Activated CD4-positive, alpha-beta T cell treated with anti-CD3 and anti-CD28 coated beads for 36 hours (primary cell): ENCODE measurements at regions of chr2 and their contacts with region 1.

Region 1: GRCh38 chr2:10434886-10435819 is 13.0 kb downstream of the ODC1 start:
- DNase-seq: peak; percentile 85
- ATAC-seq: peak; percentile 56
- H3K4me3 Mint-ChIP-seq: no peak overlapping the region
- H3K27ac Mint-ChIP-seq: no peak overlapping the region
- H3K4me1 Mint-ChIP-seq: peaks cover 11% of the 10 kb centered on the region
- H3K27me3 Mint-ChIP-seq: peaks cover 6% of the 10 kb centered on the region

Region 2: GRCh38 chr2:9984217-9984739 is 450.9 kb before region 1 on chr2:
- CTCF ChIA-PET with region 1: interaction called, 6 read pairs
- POLR2A ChIA-PET with region 1: no interaction called
- intact Hi-C with region 1: loop called in 1 of 2 experiments (anchors 1 kb)
- DNase-seq: peak; percentile 51
- ATAC-seq: peak; percentile 80
- H3K4me3 Mint-ChIP-seq: no peak overlapping the region
- H3K27ac Mint-ChIP-seq: no peak overlapping the region
- H3K4me1 Mint-ChIP-seq: peaks cover 16% of the 10 kb centered on the region
- H3K27me3 Mint-ChIP-seq: peaks cover 7% of the 10 kb centered on the region

Region 3: DNA sequence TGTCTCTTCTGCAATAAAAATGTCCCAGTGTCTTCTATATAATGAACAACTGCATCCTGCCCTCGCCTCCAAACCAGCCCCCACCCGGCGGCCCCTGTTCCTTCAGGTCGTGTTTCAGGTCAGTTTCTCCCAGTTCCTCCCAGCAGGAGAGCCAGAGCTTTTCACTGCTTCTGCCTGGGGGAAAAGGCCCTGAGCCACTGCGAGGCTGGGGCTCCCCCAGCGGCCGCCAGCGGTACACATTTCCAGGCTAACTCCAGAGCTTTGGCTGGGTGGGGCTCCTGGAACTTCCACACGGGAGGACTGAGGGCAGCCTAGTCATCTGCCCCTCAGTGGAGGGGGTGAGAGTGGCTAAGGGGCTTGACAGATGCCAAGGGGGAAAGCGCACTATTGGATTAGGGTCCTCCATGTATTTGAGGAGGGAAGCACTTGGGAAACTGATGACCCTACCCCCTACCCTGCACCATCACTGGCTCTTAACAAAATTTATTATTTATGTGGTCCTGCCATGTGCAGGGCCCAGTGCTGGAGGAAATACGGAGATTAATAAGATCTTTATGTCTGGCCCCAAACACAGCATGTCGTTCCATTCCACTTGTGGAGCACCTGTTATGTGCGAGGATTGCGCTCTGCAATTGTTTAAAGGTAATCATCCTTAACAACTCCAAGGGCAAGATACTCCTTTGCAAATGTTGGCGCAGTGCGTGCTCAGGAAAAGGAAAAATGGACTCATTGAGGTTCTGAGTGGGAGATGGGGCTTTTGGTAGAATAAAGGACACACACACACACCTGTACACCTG is 337.6 kb before region 1 on chr2:
- CTCF ChIA-PET with region 1: interaction called, 11 read pairs
- POLR2A ChIA-PET with region 1: no interaction called
- intact Hi-C with region 1: no loop called
- DNase-seq: peak; percentile 59
- ATAC-seq: peak; percentile 83
- H3K4me3 Mint-ChIP-seq: no peak overlapping the region
- H3K27ac Mint-ChIP-seq: no peak overlapping the region
- H3K4me1 Mint-ChIP-seq: no peaks in the 10 kb centered on the region
- H3K27me3 Mint-ChIP-seq: peaks cover 24% of the 10 kb centered on the region

Region 4: GRCh38 chr2:10216677-10217488 is 218.3 kb before region 1 on chr2:
- CTCF ChIA-PET with region 1: interaction called, 3 read pairs
- POLR2A ChIA-PET with region 1: no interaction called
- intact Hi-C with region 1: loop called (anchors 5 to 10 kb)
- DNase-seq: no peak
- ATAC-seq: no peak
- H3K4me3 Mint-ChIP-seq: no peak overlapping the region
- H3K27ac Mint-ChIP-seq: no peak overlapping the region
- H3K4me1 Mint-ChIP-seq: no peaks in the 10 kb centered on the region
- H3K27me3 Mint-ChIP-seq: no peaks in the 10 kb centered on the region